Dendritic cell treated with granulocyte-macrophage colony-stimulating factor and Interleukin-4, amounts not matched to agents 40 ng/mL and 50 ng/mL, for 4 days (primary cell): ENCODE measurements at regions of chr10 and their contacts with region 1.

Region 1: DNA sequence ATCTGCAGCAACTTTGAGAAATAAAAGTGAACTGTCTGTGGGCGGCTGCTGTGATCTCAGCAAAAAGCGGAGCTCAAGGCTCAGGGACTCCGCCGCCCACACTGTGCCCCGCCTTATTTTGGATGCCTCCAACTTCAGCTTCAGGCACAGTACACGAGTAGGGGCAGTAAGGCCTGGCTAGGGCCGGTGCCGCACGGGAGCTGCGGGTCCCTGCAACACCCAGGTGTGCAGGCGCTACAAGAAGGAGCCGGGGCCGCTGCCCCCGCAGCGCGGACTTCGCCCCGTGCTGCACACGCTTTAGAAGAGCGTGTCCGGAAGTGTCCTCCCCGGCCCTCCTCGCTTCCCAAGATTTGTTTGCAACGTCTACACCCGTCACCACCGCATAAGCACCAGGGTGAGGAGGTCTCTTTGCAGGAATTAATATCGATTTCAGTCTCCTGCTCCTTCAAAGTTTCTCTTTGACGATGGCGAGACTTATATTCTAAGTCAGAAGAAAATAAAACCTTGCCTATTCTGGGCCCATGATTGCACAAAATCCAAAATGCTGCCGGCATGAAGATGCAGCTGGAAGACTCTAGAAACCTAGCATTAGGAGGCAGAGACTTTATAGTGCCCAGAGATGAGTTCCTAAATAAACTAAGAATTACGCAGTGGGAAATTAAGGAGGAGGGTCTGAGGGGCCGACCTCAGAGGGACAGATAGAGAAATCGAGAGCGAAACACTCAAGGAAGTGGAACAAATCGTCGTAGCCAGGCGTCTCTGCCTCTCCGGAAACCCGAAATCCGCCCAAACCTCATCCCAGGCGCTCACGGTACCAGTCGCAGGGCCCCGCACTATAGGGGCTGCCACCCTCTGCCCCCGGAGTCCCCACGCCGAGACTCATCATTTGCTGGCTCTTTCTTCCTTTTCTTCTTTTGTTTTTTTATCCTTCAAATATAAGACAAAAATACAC is 6.4 kb downstream of the VAX1 start:
- H3K4me3 Mint-ChIP-seq: peak overlapping the region; percentile 59
- H3K27ac Mint-ChIP-seq: no peak overlapping the region
- H3K4me1 Mint-ChIP-seq: peaks cover 46% of the 10 kb centered on the region
- H3K27me3 Mint-ChIP-seq: peaks cover 90% of the 10 kb centered on the region

Region 2: DNA sequence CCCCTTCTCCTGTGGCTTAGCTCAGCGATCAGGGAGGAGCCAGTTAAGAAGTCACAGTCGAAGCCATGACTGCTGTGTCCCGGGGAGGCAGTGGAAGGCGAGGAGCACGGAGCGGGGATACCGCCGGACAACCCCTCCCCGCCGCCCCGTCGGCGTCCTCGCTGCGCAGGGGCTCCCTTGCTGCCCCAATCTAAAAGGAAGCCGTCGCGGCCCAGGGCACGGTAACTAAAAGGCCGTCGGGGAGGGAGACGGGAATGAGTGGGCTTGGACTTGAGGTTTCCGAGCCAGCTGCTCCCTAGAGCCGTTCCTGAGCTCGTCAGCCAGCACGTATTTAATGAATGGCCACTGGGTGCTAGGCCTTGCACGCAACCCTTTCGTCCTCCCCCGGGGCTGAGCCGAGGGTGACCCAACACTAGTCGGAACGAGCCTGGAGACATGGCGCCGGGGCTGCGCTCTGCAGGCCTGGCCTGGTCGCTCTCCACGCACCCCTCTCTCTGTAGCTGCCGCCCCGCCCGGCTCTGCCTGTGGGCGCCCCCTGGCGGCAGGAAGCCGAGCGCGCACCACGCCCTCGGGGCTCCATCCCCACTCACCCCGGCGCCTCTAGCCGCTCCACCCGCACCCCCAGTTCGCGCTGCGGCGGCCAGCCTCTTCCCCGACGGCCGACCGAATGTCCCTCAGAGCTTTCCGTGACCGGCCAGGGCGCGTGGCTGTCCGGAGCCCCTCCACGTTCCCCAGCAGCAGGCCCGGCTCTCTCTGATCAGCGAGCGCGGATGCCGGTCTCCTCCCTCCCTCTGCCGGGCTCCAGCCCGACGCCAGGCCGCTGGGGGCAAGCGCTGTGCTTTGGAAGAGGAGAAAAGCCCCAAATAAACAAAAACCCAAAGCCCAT is 36.4 kb after region 1 on chr10:
- intact Hi-C with region 1: loop called (anchors 2 kb)
- H3K4me3 Mint-ChIP-seq: peak overlapping the region; percentile 67
- H3K27ac Mint-ChIP-seq: no peak overlapping the region
- H3K4me1 Mint-ChIP-seq: peaks cover 51% of the 10 kb centered on the region
- H3K27me3 Mint-ChIP-seq: peaks cover 99% of the 10 kb centered on the region